Activated CD4-positive, alpha-beta T cell treated with anti-CD3 and anti-CD28 coated beads for 36 hours (primary cell): ENCODE measurements at regions of chr5 and their contacts with region 1.

Region 1: DNA sequence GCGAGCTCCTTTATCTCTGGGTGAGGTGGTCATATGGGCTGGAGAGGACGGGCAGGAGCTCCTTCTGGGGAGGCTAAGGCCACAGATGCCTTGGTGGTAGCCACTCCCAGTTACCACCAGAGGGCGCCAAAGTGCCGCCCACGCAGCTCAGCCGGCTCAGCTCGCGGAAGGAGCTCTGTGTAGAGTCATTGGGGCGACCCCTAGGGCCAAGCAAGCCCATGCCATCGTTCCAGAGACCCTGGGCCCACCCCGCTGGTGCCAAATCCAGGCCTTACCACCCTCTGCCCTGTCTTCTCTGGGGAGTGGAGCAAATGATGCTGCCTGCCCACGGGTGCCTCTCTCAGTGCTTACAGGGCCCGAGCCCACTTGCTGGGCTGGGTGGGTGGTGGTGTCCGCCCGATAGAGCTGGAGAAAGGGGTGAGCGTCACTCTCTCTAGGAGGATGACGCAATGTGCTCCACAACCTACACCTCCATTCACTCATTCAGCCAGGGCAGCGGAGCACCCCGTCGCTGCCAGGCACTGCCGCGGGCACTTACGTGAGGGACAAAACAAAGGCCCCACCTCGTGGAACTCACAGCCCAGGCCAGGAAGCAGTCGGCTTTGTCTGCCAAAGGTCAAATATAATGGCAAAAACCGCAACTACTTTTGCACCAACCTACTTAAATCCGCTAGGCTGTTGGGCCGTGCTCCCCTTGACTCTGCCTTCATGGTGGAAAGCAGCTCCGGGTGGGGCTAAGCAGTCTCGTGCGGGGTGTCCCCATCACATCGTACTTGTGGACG is 13.8 kb downstream of the TSPAN17 start:
- DNase-seq: peak; percentile 89
- ATAC-seq: peak; percentile 78
- H3K4me3 Mint-ChIP-seq: no peak overlapping the region
- H3K27ac Mint-ChIP-seq: no peak overlapping the region
- H3K4me1 Mint-ChIP-seq: peaks cover 29% of the 10 kb centered on the region
- H3K27me3 Mint-ChIP-seq: peaks cover 8% of the 10 kb centered on the region

Region 2: GRCh38 chr5:176679365-176680225 is 18.5 kb after region 1 on chr5:
- CTCF ChIA-PET with region 1: interaction called, 10 read pairs
- POLR2A ChIA-PET with region 1: no interaction called
- intact Hi-C with region 1: no loop called
- DNase-seq: no peak
- ATAC-seq: no peak
- H3K4me3 Mint-ChIP-seq: no peak overlapping the region
- H3K27ac Mint-ChIP-seq: no peak overlapping the region
- H3K4me1 Mint-ChIP-seq: no peaks in the 10 kb centered on the region
- H3K27me3 Mint-ChIP-seq: peaks cover 34% of the 10 kb centered on the region

Region 3: DNA sequence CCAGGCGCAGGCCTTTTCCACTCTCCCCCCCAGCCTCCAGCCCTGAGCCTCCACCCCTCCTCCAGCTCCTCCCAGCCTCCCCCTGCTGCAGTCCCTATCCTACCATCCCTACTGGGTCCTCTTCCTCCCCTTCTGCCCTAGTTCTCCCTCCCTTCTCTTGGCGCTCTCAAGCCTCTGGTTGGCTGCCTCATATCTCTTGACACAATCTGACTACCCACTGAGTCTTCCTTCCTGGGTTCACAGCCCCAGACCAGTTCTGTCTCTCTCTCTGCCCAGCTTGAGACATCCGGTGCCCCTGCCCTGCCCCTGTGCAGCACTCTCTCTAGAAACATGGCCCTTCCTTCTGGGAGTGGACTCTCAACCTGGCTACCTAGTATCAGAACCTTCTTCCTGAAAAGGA is 62.4 kb after region 1 on chr5:
- CTCF ChIA-PET with region 1: no interaction called
- POLR2A ChIA-PET with region 1: no interaction called
- intact Hi-C with region 1: no loop called
- DNase-seq: no peak
- ATAC-seq: no peak
- H3K4me3 Mint-ChIP-seq: no peak overlapping the region
- H3K27ac Mint-ChIP-seq: no peak overlapping the region
- H3K4me1 Mint-ChIP-seq: no peaks in the 10 kb centered on the region
- H3K27me3 Mint-ChIP-seq: peaks cover 31% of the 10 kb centered on the region

Region 4: GRCh38 chr5:176743136-176743861 is 82.2 kb after region 1 on chr5:
- CTCF ChIA-PET with region 1: interaction called, 5 read pairs
- POLR2A ChIA-PET with region 1: no interaction called
- intact Hi-C with region 1: loop called in 1 of 2 experiments (anchors 2 kb)
- DNase-seq: no peak
- ATAC-seq: no peak
- H3K4me3 Mint-ChIP-seq: no peak overlapping the region
- H3K27ac Mint-ChIP-seq: no peak overlapping the region
- H3K4me1 Mint-ChIP-seq: peaks cover 25% of the 10 kb centered on the region
- H3K27me3 Mint-ChIP-seq: peaks cover 74% of the 10 kb centered on the region

Region 5: DNA sequence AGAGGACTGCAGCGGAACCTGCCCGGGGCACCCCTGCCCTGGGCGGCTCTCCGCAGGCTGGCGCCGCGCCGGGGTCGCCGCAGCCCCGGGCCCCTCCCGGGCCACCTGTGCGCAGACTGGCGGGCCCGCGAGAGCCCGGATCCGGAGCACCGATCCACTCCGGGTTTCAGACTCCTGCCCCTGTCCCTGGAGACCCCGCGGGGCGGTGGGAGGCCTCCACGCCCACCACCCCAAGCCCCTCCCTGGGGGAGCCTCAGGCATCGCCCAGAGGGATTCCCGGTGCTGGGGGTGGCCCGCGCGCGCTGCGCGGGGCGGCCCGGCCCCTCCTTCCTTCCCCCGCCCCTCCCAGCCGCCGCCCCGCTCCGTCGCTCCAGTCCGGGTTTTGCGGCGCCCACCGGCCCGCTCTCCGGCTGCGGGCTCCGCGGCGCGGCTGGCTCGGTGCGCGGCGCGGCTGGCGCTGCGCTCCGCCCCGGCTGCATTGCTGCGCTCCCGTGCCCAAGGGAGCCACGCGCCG is 149.1 kb after region 1 on chr5 and contains the start of gene UNC5A:
- CTCF ChIA-PET with region 1: interaction called, 8 read pairs
- POLR2A ChIA-PET with region 1: no interaction called
- intact Hi-C with region 1: loop called in 1 of 2 experiments (anchors 2 kb)
- DNase-seq: peak; percentile 80
- ATAC-seq: peak; percentile 61
- H3K4me3 Mint-ChIP-seq: peak within 1 kb of the TSS; percentile 43
- H3K27ac Mint-ChIP-seq: no peak within 1 kb of the TSS
- H3K4me1 Mint-ChIP-seq: peaks cover 8% of the 10 kb centered on the region
- H3K27me3 Mint-ChIP-seq: peaks cover 57% of the 10 kb centered on the region
- total RNA-seq, gene UNC5A: not detected

Region 6: GRCh38 chr5:176959051-176959450 is 298.0 kb after region 1 on chr5:
- CTCF ChIA-PET with region 1: interaction called, 9 read pairs
- POLR2A ChIA-PET with region 1: no interaction called
- intact Hi-C with region 1: loop called (anchors 2 kb)
- DNase-seq: no peak
- ATAC-seq: peak; percentile 66
- H3K4me3 Mint-ChIP-seq: no peak overlapping the region
- H3K27ac Mint-ChIP-seq: peak overlapping the region; percentile 37
- H3K4me1 Mint-ChIP-seq: peaks cover 2% of the 10 kb centered on the region
- H3K27me3 Mint-ChIP-seq: no peaks in the 10 kb centered on the region